ENCODE measurements at regions of chr15 and their contacts with region 1.

Region 1: DNA sequence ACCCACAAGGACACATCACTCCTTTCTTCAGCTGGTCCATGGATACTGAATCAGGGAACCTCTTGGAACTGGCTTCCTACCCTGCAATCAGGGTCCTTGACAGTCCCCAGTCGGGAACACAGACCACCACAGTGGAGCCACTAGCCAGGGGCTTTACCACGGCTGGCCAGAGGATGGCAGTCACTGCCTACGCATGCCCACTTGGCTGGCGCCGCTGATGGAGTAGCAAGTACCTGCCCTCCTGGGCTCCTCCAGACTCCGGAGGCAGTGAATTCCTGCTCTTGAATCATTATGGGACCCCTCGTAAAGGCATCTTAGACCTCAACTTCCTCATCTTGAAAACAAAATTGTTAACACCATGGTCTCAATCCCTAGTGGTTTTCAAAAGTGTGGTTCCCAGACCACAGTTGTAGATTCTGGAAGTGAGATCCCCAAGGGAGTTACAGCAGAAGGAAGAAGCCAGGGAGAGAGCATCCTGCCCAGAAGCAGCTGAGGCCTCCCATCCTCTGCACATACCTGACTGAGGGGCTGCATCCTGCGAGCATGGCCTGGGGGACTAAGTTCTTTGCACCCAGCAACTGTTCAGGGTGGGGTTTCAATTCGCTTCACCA is 9.1 kb upstream of the SKIC8 start:
- DNase-seq: peak; percentile 84
- H3K4me3 Mint-ChIP-seq: no peak overlapping the region
- H3K27ac Mint-ChIP-seq: no peak overlapping the region
- H3K4me1 Mint-ChIP-seq: no peaks in the 10 kb centered on the region
- H3K27me3 Mint-ChIP-seq: peaks cover 6% of the 10 kb centered on the region

Region 2: DNA sequence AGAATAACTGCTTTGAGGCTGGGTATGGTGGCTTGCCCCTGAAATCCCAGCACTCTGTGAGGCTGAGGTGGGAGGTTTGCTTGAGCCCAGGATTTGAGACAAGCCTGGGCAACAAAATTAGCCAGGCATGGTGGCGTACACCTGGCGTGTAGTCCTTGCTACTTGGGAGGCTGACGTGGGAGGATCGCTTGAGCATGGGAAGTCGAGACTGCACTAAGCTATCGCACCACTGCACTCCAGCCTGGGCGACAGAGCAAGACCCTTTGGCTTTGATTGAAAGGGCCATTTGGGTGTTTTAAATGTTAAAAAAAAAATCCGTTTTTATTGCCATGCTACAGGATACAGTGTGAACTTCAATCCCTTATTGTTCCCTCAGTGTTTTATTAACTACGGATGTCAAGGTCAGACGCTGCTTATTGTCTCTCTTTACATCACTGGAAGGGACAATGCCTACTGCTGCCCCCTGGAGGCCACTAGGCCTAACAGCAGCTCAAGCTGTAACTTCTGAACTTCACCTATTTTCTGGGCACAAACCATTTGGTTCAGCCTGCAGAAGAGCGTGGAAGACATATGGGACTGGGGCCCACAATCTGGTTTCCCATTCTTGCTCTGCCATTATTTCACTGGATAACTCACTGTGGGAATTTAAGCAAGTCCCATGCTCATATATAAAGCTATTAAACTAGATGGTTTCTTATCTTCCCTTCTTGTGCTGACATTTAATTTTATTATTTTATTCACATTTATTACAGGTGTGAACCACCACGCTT is 114.2 kb after region 1 on chr15:
- intact Hi-C with region 1: loop called (anchors 1 kb)
- DNase-seq: peak; percentile 88
- H3K4me3 Mint-ChIP-seq: no peak overlapping the region
- H3K27ac Mint-ChIP-seq: no peak overlapping the region
- H3K4me1 Mint-ChIP-seq: peaks cover 18% of the 10 kb centered on the region
- H3K27me3 Mint-ChIP-seq: peaks cover 13% of the 10 kb centered on the region